Right cardiac atrium (tissue), 5 donors: ENCODE measurements at regions of chr7 and their contacts with region 1.

Region 1: GRCh38 chr7:36291387-36292316 is 98.0 kb upstream of the ANLN start:
- DNase-seq: peak; percentile 83 to 95 (median 93)
- ATAC-seq: peak; percentile 94 to 96
- H3K4me3 ChIP-seq: peak overlapping the region; percentile 48
- H3K27ac ChIP-seq: peak overlapping the region; percentile 90
- H3K4me1 ChIP-seq: peaks cover 3% of the 10 kb centered on the region
- H3K27me3 ChIP-seq: no peaks in the 10 kb centered on the region

Region 2: DNA sequence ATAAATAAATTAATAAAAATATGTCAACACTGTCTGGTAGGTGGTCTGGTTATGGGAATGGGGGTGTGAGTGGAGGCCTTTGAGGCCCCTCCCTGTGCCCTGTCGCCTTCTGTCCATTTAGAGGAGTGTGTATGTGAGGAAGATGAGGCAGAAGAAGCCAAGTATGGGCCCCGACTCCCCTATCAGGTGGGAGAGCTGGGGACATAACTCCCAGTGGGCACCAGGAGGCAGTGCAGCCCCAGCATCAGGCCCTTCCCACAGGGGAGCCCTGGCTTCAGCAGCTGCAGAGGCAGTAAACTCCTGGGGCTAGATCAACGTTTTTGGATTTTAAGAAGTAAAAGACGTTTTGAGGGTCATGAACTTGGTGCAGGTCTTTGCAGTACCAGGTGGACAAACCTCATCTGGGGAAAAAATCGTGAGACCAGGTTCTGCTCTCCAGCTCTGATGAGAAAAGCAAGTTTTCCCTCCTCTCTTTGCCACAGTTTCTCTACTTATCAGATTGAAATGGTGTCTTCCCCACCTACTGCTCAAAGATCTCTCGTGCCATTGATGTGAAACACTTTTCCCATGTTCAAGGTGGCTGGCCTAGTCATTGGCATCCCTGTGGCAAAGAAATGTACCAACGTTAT is 306.4 kb before region 1 on chr7:
- intact Hi-C with region 1: loop called (anchors 1 to 5 kb)
- DNase-seq: peak; percentile 83 to 93 (median 92)
- ATAC-seq: peak; percentile 92 to 95
- H3K4me3 ChIP-seq: no peak overlapping the region
- H3K27ac ChIP-seq: no peak overlapping the region
- H3K4me1 ChIP-seq: no peaks in the 10 kb centered on the region
- H3K27me3 ChIP-seq: no peaks in the 10 kb centered on the region

Region 3: DNA sequence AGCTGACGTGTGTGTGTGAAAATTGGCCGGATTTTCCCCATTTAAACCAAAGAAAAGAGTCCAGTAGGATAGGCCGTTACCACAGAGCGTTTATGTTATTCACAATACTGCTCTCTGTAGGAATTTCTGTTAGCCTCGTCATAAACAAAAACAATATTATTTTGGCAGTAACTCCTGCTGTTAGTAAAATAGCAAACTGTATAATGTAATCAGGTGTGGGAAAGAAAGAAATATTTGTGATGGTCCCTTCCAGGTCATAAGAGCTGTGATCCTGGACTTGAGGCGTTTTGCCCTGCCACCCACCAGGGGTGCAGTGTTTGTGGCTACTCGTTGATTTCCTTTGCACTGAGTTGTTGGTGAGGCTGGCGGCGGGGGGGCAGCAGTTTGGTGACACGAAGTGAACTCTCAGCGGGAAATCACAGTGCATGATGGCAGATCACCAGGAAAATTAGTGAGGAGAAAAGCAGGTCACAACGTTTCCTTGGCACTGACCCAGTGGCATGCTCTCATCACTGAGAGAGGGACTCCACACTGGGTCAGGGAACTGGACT is 135.8 kb before region 1 on chr7:
- intact Hi-C with region 1: loop called in 2 of 4 experiments (anchors 5 kb)
- DNase-seq: peak; percentile 66 to 81 (median 76)
- ATAC-seq: no peak
- H3K4me3 ChIP-seq: peak overlapping the region; percentile 21
- H3K27ac ChIP-seq: peak overlapping the region; percentile 1
- H3K4me1 ChIP-seq: peaks cover 8% of the 10 kb centered on the region
- H3K27me3 ChIP-seq: no peaks in the 10 kb centered on the region

Region 4: DNA sequence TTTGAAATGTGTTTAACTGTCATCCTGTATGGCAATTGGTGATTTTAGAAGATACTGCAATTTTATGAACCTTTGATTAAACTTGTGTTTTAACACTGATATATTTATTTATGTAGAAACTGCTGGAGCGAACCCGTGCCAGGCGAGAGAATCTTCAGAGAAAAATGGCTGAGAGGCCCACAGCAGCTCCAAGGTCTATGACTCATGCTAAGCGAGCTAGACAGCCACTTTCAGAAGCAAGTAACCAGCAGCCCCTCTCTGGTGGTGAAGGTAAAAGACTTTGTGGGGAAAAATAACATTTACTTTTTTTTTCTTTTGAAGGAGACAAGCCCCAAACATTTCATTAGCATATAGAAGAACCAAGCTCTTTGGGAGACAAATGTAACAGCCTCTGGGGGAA is 104.5 kb after region 1 on chr7:
- intact Hi-C with region 1: no loop called
- DNase-seq: no peak
- ATAC-seq: no peak
- H3K4me3 ChIP-seq: no peak overlapping the region
- H3K27ac ChIP-seq: no peak overlapping the region
- H3K4me1 ChIP-seq: no peaks in the 10 kb centered on the region
- H3K27me3 ChIP-seq: no peaks in the 10 kb centered on the region

Region 5: DNA sequence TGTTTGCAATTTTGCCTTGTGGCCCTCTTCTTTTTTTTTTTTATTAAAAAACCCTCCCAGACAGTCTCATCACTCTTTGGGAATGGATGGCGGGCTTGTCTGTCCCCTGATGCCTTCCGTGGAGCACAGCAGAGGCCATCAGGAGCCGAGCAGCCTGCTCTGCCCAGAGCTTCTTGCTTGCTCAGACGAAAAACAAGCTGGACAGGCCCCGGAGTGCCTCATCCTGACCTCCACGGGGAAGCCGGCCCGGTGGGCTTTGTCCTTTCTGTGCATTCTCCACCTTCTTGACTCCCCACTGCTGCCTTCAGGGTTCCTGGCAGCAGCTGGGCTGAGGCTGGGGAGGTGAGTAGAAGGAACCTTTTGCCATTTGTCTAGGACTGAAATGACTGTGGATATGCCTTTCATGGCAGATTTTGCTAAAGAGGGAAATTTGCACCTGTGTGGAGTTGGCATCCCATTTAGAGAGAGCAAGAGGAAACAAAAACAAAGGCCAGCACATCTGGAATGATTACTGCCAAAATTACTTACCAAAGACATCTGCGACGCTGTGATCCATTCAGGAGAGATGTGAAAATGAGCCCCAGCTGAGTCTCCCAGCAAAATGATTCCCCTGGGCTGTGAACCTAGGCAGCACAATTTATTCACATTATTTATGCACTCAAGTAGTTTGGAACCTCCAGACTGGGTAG is 324.3 kb after region 1 on chr7:
- intact Hi-C with region 1: no loop called
- DNase-seq: no peak
- ATAC-seq: no peak
- H3K4me3 ChIP-seq: no peak overlapping the region
- H3K27ac ChIP-seq: no peak overlapping the region
- H3K4me1 ChIP-seq: no peaks in the 10 kb centered on the region
- H3K27me3 ChIP-seq: no peaks in the 10 kb centered on the region